Gastrocnemius medialis (tissue), 4 donors: ENCODE measurements at regions of chr18 and their contacts with region 1.

Region 1: DNA sequence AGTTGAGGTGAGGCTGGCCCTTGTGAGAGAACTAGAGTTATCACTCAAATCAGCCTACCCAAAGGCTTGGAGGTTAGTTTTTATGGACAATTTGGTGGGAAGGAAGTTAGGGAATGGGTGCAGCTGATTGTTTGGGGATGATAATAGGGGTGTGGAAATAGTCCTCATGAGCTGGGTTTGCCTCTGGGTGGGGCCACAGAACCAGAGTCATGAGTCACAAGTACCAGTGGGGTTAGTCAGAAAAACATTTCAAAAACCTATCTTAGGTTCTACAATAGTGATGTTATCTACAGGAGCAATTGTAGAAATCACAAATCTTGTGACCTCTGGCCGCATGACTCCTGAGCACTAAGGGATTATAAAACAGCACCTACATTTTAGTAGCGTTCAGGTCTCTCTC is 630.1 kb upstream of the PIK3C3 start:
- DNase-seq: no peak
- ATAC-seq: no peak
- H3K4me3 ChIP-seq: no peak overlapping the region
- H3K27ac ChIP-seq: no peak overlapping the region
- H3K4me1 ChIP-seq: no peaks in the 10 kb centered on the region
- H3K27me3 ChIP-seq: no peaks in the 10 kb centered on the region
- CTCF ChIP-seq: no peak
- POLR2A ChIP-seq: no peak

Region 2: DNA sequence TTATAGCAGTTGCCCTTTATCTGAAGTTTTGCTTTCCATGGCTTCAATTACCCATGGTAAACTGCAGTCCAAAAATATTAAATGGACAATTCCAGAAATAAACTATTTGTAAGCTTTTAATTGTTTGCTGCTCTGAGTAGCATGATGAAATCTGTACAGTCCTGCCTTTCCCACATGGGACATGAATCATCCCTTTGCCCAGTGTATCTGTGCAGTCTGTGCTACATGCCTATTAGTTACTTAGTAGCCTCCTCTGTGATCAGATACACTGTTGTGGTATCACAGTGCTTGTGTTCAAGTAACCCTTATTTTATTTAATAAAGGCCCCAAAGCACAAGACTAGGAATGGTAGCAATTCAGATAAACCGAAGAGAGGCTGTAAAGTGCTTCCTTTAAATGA is 180.5 kb before region 1 on chr18:
- in situ Hi-C with region 1: no loop called
- intact Hi-C with region 1: no loop called
- DNase-seq: no peak
- ATAC-seq: no peak
- H3K4me3 ChIP-seq: no peak overlapping the region
- H3K27ac ChIP-seq: no peak overlapping the region
- H3K4me1 ChIP-seq: no peaks in the 10 kb centered on the region
- H3K27me3 ChIP-seq: no peaks in the 10 kb centered on the region
- CTCF ChIP-seq: no peak
- POLR2A ChIP-seq: no peak

Region 3: DNA sequence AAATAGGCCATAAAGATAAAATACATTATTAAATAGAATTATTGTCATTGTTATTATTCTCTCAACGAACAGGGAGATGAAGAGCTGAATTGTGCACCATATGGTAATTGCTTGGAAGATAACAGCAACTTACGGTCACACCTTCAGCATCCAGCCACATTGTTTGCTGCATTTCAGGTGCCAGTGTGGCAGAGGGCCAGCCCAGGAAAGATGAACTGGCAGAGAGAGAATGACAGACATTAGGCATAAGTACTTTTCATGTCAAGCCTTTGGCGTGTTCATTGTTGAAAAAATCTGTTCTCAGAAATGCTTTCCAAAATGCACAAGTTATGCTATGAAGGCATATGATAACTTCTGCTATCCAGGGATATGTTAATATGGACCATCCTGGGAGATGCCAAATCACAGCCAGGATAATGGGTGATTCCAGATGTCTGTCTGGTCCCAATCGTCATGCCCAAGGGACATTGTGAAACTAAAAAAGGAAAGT is 118.5 kb before region 1 on chr18:
- in situ Hi-C with region 1: loop called in 1 of 4 experiments (anchors 25 kb)
- intact Hi-C with region 1: no loop called
- DNase-seq: no peak
- ATAC-seq: no peak
- H3K4me3 ChIP-seq: no peak overlapping the region
- H3K27ac ChIP-seq: no peak overlapping the region
- H3K4me1 ChIP-seq: no peaks in the 10 kb centered on the region
- H3K27me3 ChIP-seq: no peaks in the 10 kb centered on the region
- CTCF ChIP-seq: no peak
- POLR2A ChIP-seq: no peak